Sigmoid colon (tissue), 7 donors: ENCODE measurements at regions of chr7 and their contacts with region 1.

Region 1: DNA sequence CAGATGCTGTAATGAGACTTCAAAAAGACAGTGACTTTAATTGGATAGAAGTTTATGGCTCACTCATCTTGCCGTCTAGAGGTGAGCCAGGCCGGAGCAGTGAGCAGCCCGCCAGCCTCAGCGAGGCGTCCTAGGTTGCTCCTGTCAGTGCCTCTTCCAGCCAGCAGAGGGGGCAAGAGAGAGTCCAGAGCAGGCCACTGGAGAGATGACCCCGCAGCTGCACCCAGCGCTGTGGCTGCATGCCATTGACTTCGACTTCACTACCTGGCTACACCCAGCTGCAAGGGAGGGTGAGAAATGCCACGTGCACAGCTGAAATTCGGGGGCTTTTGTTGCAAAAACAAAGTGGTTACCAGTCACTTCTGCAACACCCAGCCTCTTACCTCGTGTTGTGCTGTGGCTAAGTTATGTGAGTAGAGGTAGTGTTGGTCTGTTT is 26.5 kb downstream of the NUB1 start:
- DNase-seq: peak; percentile 93
- H3K4me3 ChIP-seq: no peak overlapping the region
- H3K27ac ChIP-seq: peak overlapping the region; percentile 60 to 84 (median 80)
- H3K4me1 ChIP-seq: peaks cover 0 to 36% (median 31%) of the 10 kb centered on the region in 4 donors
- H3K27me3 ChIP-seq: no peaks in the 10 kb centered on the region
- CTCF ChIP-seq: peak; percentile 94 to 98 (median 96)
- EP300 ChIP-seq: no peak
- POLR2A ChIP-seq: no peak

Region 2: GRCh38 chr7:151310578-151310977 is 57.6 kb before region 1 on chr7:
- intact Hi-C with region 1: no loop called
- DNase-seq: no peak
- H3K4me3 ChIP-seq: no peak overlapping the region
- H3K27ac ChIP-seq: no peak overlapping the region
- H3K4me1 ChIP-seq: peaks cover 0 to 14% (median 4%) of the 10 kb centered on the region in 4 donors
- H3K27me3 ChIP-seq: peaks cover 0 to 11% (median 9%) of the 10 kb centered on the region in 3 donors
- CTCF ChIP-seq: peak in 2 of 4 experiments; percentile 10 to 13
- EP300 ChIP-seq: no peak
- POLR2A ChIP-seq: no peak

Region 3: DNA sequence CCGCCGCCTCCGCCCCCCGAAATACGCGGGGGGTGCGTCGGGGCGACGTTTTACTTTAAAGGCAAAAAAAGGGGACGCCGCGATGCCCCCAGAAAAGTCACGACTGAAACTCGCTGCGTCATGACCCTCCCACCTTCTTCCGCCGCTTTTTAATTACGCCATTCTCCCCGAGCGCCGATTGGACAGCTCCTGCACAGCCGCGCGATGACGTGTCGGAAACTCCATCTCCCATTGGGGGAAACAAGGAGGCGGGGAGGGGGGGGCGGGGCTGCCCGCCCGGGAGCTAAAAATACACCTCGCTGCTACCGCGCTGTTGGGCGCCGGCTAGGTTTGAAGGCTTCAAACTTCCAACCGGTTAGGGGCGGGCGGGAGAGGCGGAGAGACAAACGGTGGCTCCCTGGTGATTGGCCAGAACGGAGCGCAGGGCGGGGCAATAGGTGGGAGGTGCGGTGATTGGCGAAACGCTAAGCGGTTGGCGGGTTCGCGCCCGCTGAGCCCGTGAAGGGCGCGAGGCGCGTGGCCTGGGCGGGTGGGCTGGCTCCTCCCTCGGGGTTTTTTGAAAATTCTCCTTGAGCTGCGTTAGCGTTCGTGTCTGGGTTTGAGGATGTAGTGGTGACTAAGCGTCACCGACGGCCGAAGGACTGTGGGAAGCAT is 151.7 kb after region 1 on chr7 and contains the start of gene RHEB:
- intact Hi-C with region 1: loop called (anchors 10 kb)
- DNase-seq: peak; percentile 100
- H3K4me3 ChIP-seq: peak within 1 kb of the TSS; percentile 72 to 93 (median 80)
- H3K27ac ChIP-seq: peak within 1 kb of the TSS; percentile 94 to 99 (median 96)
- H3K4me1 ChIP-seq: peaks cover 0 to 40% (median 36%) of the 10 kb centered on the region in 4 donors
- H3K27me3 ChIP-seq: no peaks in the 10 kb centered on the region
- CTCF ChIP-seq: no peak
- EP300 ChIP-seq: peak in 2 of 4 donors; percentile 60 to 76
- POLR2A ChIP-seq: peak; percentile 25 to 47
- total RNA-seq, gene RHEB: 121 to 162 (median 136) TPM